GM10248 (cell line): ENCODE measurements at regions of chr3 and their contacts with region 1.

Region 1: DNA sequence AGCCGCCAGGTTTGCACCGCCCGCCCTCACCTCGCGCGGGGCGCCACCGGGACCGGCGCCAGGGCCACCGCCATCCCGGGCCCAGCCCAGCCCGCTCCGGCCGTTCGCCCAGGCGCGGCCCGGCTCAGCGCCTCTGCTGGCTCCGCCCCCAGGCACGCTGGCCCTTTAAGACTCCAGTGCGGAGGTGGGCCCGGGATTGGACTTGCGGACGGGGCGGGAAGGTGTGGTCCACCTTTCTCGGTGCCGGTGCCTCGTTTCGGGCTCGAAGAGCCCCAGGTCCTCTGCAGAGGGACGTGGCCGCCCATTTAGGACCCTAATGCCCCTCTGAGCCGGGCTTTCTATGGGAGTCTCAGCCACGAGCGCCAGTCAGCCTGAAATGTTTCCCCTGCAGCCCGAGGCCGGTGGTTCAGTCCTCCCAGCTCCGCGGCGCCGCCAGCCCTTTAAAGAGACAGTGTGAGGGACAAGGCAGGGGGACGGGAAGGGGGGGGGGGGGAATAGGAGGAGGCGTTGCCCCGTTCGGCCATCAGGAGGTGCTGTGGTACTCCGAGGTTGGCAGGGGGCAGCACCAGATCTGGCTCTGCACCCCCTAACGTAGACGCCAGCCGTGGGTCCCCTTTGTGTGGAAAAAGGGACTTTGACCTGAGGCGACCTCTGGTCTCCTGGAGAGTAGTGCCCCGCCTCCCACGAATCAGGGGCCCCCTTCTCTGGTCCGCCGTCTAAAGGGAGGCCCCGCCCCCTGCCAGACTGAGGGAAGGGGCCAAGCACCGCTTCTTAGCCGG is 1.0 kb downstream of the HYAL2 start:
- DNase-seq: peak; percentile 91
- CTCF ChIP-seq: peak; percentile 49

Region 2: DNA sequence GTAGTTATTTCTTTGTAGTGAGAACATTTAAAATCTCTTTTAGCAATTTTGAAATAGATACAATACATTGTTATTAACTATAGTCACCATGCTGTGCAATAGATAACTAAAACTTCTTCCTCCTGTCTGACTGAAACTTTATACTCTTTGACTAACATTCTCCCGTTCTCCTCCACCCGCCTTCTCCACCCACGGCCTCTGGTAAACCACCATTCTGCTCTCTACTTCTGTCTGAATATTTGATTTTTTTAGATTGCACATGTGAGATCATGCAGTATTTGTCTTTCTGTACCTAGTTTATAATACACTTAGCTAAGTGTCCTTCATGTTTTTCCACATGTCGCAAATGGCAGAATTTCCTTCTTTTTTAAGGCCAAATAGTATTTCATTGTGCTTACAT is 305.6 kb before region 1 on chr3:
- CTCF ChIA-PET with region 1: no interaction called
- POLR2A ChIA-PET with region 1: no interaction called
- DNase-seq: no peak
- CTCF ChIP-seq: no peak

Region 3: DNA sequence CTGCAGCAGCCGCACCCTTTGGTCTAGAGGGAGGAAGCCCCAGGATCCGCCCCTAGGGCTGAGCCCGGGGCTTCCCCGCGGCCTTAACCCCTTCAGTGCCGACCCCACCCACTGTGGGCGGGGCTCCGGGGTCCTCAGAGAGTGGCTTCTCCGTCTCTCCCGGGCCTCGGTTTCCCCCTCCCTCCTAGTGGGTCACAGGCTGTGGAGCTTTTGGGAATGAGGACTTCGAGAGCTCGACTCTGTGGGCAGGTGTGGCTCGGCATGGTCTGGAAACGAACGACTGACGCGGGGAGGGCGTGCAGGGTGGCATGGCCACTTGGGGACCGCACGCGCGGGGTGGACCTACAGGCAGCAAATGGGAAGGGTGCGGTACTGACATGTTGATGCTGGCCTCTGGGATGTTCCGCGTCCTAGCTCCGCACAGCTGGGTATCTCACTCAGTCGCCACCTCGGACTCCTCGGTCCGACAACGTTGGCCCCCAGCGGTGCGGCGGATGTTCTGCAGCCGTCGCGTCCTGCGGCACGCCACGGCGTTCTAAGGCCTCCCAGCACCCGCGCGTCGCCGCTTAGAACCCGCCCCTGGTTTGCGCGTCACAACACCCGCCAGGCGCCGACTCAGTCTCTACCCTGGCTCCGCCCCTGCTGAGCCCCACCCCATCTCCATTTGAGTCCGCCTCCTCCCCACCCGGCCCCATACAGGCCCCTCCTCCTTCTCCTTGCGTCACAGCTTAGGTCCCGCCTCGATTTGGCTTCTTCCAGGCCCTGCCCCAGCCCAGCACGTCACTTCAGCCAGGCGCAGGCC is 22.5 kb before region 1 on chr3 and contains the starts of genes HYAL3 and NAA80:
- CTCF ChIA-PET with region 1: interaction called, 23 read pairs
- POLR2A ChIA-PET with region 1: interaction called, 3 read pairs
- DNase-seq: peak; percentile 99
- CTCF ChIP-seq: peak; percentile 22

Region 4: DNA sequence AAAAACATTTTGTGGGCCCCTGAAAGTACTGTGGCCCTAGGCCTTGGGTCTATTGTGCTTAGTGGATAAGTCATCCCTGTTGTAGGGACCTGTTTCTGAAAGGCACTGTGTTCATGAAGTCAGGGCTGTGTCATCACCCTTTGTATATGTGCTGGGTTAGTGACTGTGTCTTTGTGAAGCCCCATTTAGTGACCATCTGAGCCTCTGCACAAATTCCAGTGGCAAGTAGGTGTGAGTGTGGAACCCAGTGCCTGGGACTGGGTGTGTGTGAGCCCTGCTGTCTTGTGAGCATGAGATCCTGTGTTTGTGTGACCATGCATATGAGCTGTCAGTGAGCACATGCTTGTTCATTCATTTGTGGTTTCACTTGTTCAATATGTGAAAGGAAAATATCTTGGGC is 16.9 kb before region 1 on chr3:
- CTCF ChIA-PET with region 1: interaction called, 23 read pairs
- POLR2A ChIA-PET with region 1: interaction called, 3 read pairs
- DNase-seq: no peak
- CTCF ChIP-seq: no peak

Region 5: GRCh38 chr3:50337191-50337841 is 15.8 kb after region 1 on chr3:
- CTCF ChIA-PET with region 1: interaction called, 41 read pairs
- POLR2A ChIA-PET with region 1: interaction called, 3 read pairs
- DNase-seq: peak; percentile 99
- CTCF ChIP-seq: no peak

Region 6: DNA sequence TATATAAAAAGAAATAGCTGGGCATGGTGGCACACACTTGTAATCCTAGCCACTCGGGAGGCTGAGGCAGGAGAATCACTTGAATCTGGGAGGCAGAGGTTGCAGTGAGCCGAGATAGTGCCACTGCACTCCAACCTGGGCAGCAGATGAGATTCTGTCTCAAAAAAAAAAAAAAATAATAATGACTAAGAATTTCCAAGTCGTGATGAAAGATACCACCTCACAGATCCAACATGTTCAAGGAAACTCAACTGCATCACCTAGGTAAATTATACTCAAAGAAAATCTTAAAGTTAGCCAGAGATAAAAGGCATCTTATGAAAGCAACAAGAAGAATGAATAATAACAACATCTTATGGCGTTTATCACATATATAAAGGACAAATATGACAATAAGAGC is 403.3 kb after region 1 on chr3:
- CTCF ChIA-PET with region 1: no interaction called
- POLR2A ChIA-PET with region 1: no interaction called
- DNase-seq: no peak
- CTCF ChIP-seq: no peak